ENCODE measurements at regions of chr11 and their contacts with region 1.

Region 1: GRCh38 chr11:111878849-111879636 is at the starts of genes CFAP68 and FDXACB1:
- DNase-seq: peak; percentile 99
- H3K4me3 ChIP-seq: peak within 1 kb of the TSS; percentile 59 to 72
- H3K27ac ChIP-seq: peak within 1 kb of the TSS; percentile 94
- H3K4me1 ChIP-seq: peaks cover 18% of the 10 kb centered on the region
- H3K27me3 ChIP-seq: no peaks in the 10 kb centered on the region
- CTCF ChIP-seq: peak; percentile 92 to 98 (median 97)
- POLR2A ChIP-seq: no peak
- total RNA-seq, gene CFAP68: 22.6 TPM
- total RNA-seq, gene FDXACB1: not detected

Region 2: DNA sequence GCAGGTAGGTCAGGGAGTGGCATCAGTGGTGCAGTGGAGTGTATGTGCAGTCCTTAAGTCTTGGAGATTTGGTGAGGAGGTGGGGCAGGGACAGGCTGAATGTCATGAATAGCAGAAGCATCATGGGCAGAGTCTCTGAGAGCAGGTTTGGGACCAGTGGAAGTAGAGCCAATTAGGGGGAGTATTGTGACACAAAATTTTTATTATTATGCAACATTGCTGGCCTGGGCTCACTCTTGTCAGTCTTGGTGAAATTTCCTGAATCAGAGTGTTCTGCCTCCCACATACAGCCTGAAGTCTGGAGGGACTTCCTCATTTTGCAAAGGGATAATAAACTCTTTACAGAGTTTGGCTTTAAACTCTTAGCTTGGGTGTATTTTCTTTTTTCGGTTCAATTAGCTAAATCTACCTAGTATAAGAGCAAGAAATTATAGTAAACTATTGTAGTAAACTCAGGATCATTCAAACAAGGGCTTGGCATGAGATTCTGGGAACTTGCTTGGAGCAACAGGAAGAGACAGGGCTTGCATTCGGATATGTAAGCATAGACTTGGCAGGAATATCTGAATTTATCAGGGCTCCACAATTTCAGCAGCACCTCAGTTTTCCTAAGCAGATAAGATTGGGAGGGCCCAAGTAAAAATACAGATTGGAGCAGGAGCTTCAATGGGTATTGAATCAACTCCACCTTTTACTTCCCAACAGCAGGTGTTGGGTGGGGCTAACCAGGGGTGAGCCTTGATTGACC is 1381.6 kb before region 1 on chr11:
- intact Hi-C with region 1: no loop called
- DNase-seq: peak in 1 of 2 donors; percentile 84
- H3K4me3 ChIP-seq: no peak overlapping the region
- H3K27ac ChIP-seq: no peak overlapping the region
- H3K4me1 ChIP-seq: no peaks in the 10 kb centered on the region
- H3K27me3 ChIP-seq: no peaks in the 10 kb centered on the region
- CTCF ChIP-seq: no peak
- POLR2A ChIP-seq: no peak

Region 3: DNA sequence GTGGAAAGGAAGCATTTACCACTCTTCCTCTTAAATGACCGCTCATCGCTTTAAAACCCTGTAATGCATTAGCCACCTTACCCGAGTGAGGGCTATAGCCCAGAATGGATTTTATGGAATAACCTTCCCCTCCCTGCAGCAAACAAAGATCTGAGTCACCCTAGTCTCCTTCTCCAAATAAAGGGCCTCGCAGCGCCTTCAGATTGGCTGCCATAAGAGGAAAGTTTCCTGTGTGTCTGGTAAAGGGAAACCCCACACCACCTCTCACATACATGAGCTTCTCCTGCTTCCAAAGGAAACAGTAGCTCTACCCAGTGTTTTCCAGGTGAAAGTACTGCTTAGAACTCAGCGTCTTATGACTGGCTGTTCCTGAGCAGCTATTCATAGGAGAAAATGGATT is 160.6 kb before region 1 on chr11:
- intact Hi-C with region 1: no loop called
- DNase-seq: no peak
- H3K4me3 ChIP-seq: no peak overlapping the region
- H3K27ac ChIP-seq: peak overlapping the region; percentile 7
- H3K4me1 ChIP-seq: peaks cover 16% of the 10 kb centered on the region
- H3K27me3 ChIP-seq: no peaks in the 10 kb centered on the region
- CTCF ChIP-seq: no peak
- POLR2A ChIP-seq: no peak

Region 4: DNA sequence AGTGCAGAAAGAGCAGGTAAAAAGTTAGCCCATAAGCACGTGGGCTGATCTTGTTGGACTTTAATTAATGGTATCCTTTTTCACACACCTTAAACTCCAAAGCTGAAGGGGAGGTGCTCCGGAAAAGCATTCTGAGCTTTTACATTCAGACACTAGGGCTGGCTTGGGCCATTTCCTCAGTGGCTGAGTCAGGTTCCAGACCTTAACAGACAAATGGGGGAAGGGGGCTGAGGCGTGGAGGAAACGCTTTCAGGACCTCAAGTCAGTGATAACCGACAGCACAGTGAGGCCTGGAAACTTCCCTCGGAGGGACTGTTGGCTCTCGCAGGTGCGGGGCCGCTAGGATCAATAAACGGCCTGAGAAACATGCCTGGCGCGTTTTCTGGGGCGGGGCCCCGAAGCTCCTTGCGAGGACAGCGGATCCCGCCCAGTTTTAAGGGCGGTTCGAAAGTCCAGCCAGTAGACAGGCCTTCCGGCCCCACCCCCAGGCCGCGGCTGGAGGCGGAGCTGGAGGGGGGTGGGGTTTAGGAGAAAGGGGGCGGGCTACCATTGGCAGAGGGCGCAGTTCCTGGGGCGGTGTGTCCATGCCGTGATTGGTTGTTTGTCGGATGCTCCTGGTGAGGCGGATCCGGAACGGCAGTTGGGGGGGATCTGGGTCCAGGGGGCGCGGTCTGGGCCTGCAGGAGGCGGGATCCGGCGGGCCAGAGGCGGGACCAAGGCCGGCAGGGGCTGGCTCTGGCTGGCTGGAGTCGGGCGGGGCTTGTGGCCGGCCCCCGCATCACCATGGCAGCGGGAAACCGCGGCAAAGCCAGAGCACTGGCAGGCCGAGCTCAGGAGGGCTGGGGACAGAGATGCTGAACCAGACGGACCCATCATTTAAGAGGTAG is 47.7 kb after region 1 on chr11:
- intact Hi-C with region 1: loop called (anchors 10 kb)
- DNase-seq: peak in 1 of 2 donors; percentile 97
- H3K4me3 ChIP-seq: peak overlapping the region; percentile 29 to 39
- H3K27ac ChIP-seq: peak overlapping the region; percentile 71
- H3K4me1 ChIP-seq: peaks cover 31% of the 10 kb centered on the region
- H3K27me3 ChIP-seq: no peaks in the 10 kb centered on the region
- CTCF ChIP-seq: no peak
- POLR2A ChIP-seq: peak in 1 of 2 donors; percentile 57

Region 5: GRCh38 chr11:111977146-111978027 is 98.3 kb after region 1 on chr11:
- intact Hi-C with region 1: loop called (anchors 10 kb)
- DNase-seq: no peak
- H3K4me3 ChIP-seq: peak overlapping the region; percentile 65 to 73
- H3K27ac ChIP-seq: peak overlapping the region; percentile 96
- H3K4me1 ChIP-seq: peaks cover 44% of the 10 kb centered on the region
- H3K27me3 ChIP-seq: no peaks in the 10 kb centered on the region
- CTCF ChIP-seq: no peak
- POLR2A ChIP-seq: no peak

Region 6: GRCh38 chr11:112086422-112087191 is 207.6 kb after region 1 on chr11 and contains the starts of genes SDHD and TIMM8B:
- intact Hi-C with region 1: loop called (anchors 5 kb)
- DNase-seq: peak; percentile 96 to 98
- H3K4me3 ChIP-seq: peak within 1 kb of the TSS; percentile 64 to 83
- H3K27ac ChIP-seq: peak within 1 kb of the TSS; percentile 77
- H3K4me1 ChIP-seq: peaks cover 35% of the 10 kb centered on the region
- H3K27me3 ChIP-seq: no peaks in the 10 kb centered on the region
- CTCF ChIP-seq: peak in 2 of 3 experiments; percentile 2 to 21
- POLR2A ChIP-seq: no peak
- total RNA-seq, gene SDHD: 121 TPM
- total RNA-seq, gene TIMM8B: 43.0 TPM

Measured in vagina (tissue), 2 donors.